PC-9 (cell line): ENCODE measurements at regions of chr1 and their contacts with region 1.

Region 1: GRCh38 chr1:230215031-230215430 is 148.0 kb downstream of the GALNT2 start:
- DNase-seq: no peak
- H3K4me3 ChIP-seq: no peak overlapping the region
- H3K27ac ChIP-seq: no peak overlapping the region
- H3K4me1 ChIP-seq: no peaks in the 10 kb centered on the region
- H3K27me3 ChIP-seq: no peaks in the 10 kb centered on the region
- CTCF ChIP-seq: no peak

Region 2: GRCh38 chr1:230282157-230282556 is 67.1 kb after region 1 on chr1:
- CTCF ChIA-PET with region 1: no interaction called
- POLR2A ChIA-PET with region 1: no interaction called
- intact Hi-C with region 1: no loop called
- DNase-seq: no peak
- H3K4me3 ChIP-seq: no peak overlapping the region
- H3K27ac ChIP-seq: no peak overlapping the region
- H3K4me1 ChIP-seq: no peaks in the 10 kb centered on the region
- H3K27me3 ChIP-seq: no peaks in the 10 kb centered on the region
- CTCF ChIP-seq: no peak

Region 3: DNA sequence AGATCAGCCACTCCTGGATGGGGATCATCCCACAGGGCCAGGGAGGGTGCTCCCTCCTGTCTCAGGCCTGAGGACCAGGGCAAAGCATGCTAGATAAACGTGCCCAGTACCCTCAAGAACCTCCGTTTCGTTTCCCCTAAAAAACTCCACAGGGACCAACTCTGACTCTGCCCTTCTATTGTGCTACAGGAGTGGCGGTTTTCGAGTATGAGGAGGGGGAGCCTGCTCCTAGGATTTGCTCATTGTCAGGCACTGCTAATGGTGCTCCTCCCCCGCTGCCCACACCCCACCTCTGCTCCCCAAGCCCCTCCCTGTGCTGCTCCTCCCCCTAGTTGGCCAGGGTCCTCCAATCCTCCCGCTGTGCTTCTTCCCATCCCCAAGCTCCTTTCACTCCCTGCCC is 179.1 kb after region 1 on chr1:
- CTCF ChIA-PET with region 1: no interaction called
- POLR2A ChIA-PET with region 1: interaction called, 17 read pairs
- intact Hi-C with region 1: no loop called
- DNase-seq: no peak
- H3K4me3 ChIP-seq: no peak overlapping the region
- H3K27ac ChIP-seq: no peak overlapping the region
- H3K4me1 ChIP-seq: no peaks in the 10 kb centered on the region
- H3K27me3 ChIP-seq: peaks cover 65% of the 10 kb centered on the region
- CTCF ChIP-seq: no peak

Region 4: GRCh38 chr1:230464616-230465015 is 249.6 kb after region 1 on chr1:
- CTCF ChIA-PET with region 1: no interaction called
- POLR2A ChIA-PET with region 1: no interaction called
- intact Hi-C with region 1: no loop called
- DNase-seq: no peak
- H3K4me3 ChIP-seq: no peak overlapping the region
- H3K27ac ChIP-seq: no peak overlapping the region
- H3K4me1 ChIP-seq: peaks cover 4% of the 10 kb centered on the region; the same call in 1 of the 2 replicates
- H3K27me3 ChIP-seq: 0 out of 2 replicates have a peak, but pooled peaks cover 3% of the 10 kb centered on the region
- CTCF ChIP-seq: no peak